ENCODE measurements at regions of chr11 and their contacts with region 1.

Region 1: GRCh38 chr11:10735481-10736475 is 15.3 kb upstream of the CTR9 start:
- DNase-seq: peak; percentile 96
- H3K4me3 ChIP-seq: peak overlapping the region; percentile 43
- H3K27ac ChIP-seq: peak overlapping the region; percentile 88
- H3K27me3 ChIP-seq: no peaks in the 10 kb centered on the region
- CTCF ChIP-seq: peak; percentile 99

Region 2: GRCh38 chr11:10514210-10514609 is 221.6 kb before region 1 on chr11:
- CTCF ChIA-PET with region 1: interaction called, 11 read pairs
- POLR2A ChIA-PET with region 1: no interaction called
- DNase-seq: no peak
- H3K4me3 ChIP-seq: no peak overlapping the region
- H3K27ac ChIP-seq: no peak overlapping the region
- H3K27me3 ChIP-seq: no peaks in the 10 kb centered on the region
- CTCF ChIP-seq: peak; percentile 51

Measured in AG04450 (cell line).